ENCODE measurements at regions of chr9 and their contacts with region 1.

Region 1: DNA sequence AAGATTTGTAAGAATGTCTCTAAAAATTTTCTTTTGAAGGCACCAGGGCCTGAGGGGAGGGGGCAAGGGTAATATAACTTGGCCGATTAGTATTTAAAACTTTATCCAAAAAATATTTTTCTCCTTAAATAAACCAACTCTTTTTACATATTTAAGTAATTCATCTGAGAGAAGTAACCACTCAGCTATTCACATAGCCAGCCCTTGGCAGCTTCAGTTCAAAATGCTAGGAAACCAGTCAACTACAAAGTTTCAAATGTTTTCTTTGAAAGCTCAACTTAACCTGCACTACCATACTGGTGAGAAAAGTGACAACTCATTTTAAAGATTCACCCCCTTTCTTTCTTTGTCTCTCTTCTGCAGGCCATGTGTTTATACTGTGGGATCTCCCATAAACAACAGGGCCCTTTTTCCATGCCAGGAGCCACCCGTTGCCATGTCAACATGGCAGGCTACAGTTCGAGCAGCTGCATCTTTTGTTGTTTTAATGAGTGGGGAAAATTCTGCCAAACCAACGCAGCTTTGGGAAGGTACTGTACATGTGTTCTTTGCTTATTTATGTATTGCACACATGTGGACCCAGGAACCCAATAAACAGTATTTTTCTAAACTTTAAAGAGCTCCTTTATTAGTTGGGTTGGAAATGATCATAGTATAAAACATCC is 46.3 kb downstream of the AOPEP start:
- DNase-seq: no peak

Region 2: GRCh38 chr9:94736759-94737158 is 36.0 kb before region 1 on chr9:
- intact Hi-C with region 1: loop called (anchors 5 kb)
- DNase-seq: no peak

Region 3: GRCh38 chr9:95249986-95250385 is 477.2 kb after region 1 on chr9:
- intact Hi-C with region 1: no loop called
- DNase-seq: no peak

Measured in cardiac septum (tissue), 1 donor.